ENCODE measurements at regions of chr5 and their contacts with region 1.

Region 1: DNA sequence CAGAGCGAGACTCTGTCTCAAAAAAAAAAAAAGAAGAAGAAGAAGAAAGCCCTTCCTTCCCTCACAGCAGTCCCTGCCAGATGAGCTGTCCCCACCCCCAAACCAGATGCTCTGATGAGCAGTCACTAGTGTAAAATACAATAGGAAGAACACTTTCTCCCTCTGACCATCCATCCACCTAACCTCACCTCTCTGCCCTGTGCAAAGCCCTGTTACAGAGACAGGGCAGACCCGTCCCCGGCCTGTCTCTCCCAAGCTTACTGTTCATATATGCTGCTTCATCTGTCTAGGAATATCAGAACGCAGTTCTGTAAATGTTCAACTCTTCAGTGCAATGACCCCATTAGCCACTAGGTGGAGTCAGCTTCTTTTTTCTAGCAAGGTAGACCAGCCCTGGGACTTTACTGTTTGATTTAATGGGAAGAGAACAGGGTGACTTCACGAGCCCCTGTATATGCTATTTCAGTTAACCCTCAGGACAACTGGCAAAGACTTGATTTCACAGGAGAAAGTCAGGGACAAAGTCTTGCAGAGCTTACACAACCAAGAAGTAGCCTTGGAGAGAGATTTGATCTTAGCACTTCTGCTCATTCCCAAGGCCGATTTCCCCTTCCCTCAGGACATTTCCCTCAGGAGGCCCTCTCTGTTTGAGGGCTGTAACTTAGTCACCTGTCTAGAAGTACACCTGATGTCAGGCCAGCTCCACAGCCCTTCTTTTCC is 14.9 kb upstream of the FGFR4 start:
- DNase-seq: peak in 1 of 2 experiments; percentile 88
- H3K4me3 ChIP-seq: no peak overlapping the region
- H3K27ac ChIP-seq: no peak overlapping the region
- H3K4me1 ChIP-seq: no peaks in the 10 kb centered on the region
- H3K27me3 ChIP-seq: no peaks in the 10 kb centered on the region; a peak in 1 of 7 replicates
- CTCF ChIP-seq: peak in 2 of 3 experiments; percentile 65 to 90; a peak in 2 of 4 replicates
- EP300 ChIP-seq: no peak
- POLR2A ChIP-seq: no peak
- RAD21 ChIP-seq: peak; percentile 68 to 76

Region 2: DNA sequence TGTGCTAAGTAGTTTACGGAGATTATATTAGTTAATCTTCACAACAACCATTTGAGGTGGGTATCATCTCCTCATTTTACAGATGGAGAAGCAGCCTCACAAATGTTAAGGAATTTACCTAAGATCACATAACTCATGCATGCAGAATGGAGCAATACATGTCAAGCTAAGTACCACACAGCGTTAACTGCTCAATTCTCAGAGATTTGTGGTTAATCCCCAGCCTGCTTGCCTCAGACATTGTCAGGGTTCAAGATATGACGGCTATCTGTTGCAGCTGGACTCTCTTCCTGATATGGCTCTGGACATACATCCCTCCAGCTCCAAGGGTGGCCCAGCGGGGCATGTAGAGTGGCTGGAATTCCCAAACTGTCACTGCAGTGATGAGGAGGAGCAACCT is 56.7 kb before region 1 on chr5:
- CTCF ChIA-PET with region 1: interaction called, 15 read pairs
- POLR2A ChIA-PET with region 1: no interaction called
- DNase-seq: no peak
- H3K4me3 ChIP-seq: no peak overlapping the region
- H3K27ac ChIP-seq: no peak overlapping the region
- H3K4me1 ChIP-seq: no peaks in the 10 kb centered on the region; a peak in 1 of 7 replicates
- H3K27me3 ChIP-seq: no peaks in the 10 kb centered on the region
- CTCF ChIP-seq: no peak
- EP300 ChIP-seq: no peak
- POLR2A ChIP-seq: no peak
- RAD21 ChIP-seq: no peak

Region 3: DNA sequence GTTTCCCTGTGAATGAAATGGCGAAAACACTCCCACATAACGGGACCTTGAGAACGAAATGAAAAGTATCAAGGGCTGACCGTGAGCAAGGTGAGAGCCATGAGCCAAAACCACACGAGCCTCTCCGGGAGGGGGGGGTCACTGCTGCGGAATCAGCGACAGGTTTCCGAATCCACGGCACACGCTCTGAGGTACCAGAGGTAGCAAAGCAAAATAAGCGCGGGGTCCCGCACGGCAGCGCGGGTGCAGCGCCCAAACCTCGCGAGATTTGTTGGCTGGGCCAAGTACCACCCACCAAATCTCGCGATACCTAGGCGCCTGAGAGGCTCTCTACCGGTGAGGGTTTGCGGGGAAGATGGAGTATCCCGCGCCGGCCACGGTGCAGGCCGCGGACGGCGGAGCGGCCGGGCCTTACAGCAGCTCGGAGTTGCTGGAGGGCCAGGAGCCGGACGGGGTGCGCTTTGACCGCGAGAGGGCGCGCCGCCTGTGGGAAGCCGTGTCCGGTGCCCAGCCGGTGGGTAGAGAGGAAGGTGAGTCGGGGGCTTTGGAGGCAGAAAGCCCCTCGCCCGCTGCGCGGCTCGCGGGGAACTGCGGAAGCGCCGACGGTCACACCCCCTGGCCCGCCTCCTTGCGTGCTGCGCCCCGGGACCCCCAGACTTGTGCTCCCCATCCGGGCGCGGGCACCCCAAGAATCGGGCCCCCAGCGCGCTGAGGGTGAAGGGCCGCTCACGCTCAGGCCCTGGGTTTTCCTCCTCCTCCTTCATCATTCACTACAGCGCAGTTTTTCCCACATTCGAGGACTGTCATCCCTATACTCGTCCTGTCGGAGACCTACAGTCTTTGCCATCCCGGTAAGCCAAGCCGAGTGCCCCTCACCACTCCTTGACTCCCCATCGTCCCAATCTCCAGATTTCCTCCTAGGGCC is 49.2 kb before region 1 on chr5 and contains the start of gene ZNF346:
- CTCF ChIA-PET with region 1: interaction called, 15 read pairs
- POLR2A ChIA-PET with region 1: interaction called, 3 read pairs
- DNase-seq: peak; percentile 70 to 93
- H3K4me3 ChIP-seq: peak within 1 kb of the TSS; percentile 49 to 75 (median 74)
- H3K27ac ChIP-seq: peak within 1 kb of the TSS; percentile 13; the same call in 1 of the 2 replicates
- H3K4me1 ChIP-seq: peaks cover 0 to 4% (median 0%) of the 10 kb centered on the region in 4 experiments; a peak in 3 of 7 replicates
- H3K27me3 ChIP-seq: no peaks in the 10 kb centered on the region
- CTCF ChIP-seq: peak; percentile 55 to 66 (median 64)
- EP300 ChIP-seq: no peak
- POLR2A ChIP-seq: peak in 1 of 2 experiments; percentile 87; a peak in 2 of 3 replicates
- RAD21 ChIP-seq: peak; percentile 1 to 32; a peak in 1 of 4 replicates
- total RNA-seq, gene ZNF346: 19.9 and 20.2 TPM in 2 replicates

Region 4: DNA sequence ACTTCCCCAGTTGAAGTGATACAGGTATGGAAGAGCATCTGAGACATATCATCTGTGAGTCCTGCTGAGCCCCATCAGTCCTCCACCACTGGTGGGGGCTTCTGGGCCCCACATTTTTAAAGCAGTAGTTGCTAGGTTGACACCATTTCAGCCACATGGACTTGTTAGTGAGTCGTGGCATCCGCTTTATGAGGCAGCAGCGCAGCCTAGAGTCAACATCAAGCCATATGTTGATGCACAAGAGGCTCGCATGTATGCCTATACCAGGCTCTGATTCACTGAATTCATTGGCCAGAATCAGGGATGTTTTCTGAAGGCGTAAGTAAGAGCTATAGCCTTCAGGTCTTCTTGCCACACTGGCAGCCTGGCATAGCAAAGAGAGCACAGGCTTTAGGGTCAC is 22.5 kb before region 1 on chr5:
- CTCF ChIA-PET with region 1: interaction called, 16 read pairs
- POLR2A ChIA-PET with region 1: interaction called, 4 read pairs
- DNase-seq: no peak
- H3K4me3 ChIP-seq: no peak overlapping the region
- H3K27ac ChIP-seq: no peak overlapping the region
- H3K4me1 ChIP-seq: no peaks in the 10 kb centered on the region
- H3K27me3 ChIP-seq: no peaks in the 10 kb centered on the region
- CTCF ChIP-seq: peak in 2 of 3 experiments; percentile 17 to 26; a peak in 2 of 4 replicates
- EP300 ChIP-seq: no peak
- POLR2A ChIP-seq: no peak
- RAD21 ChIP-seq: peak; percentile 36 to 55; a peak in 3 of 4 replicates

Region 5: GRCh38 chr5:177086924-177087706 is 15.3 kb after region 1 on chr5:
- CTCF ChIA-PET with region 1: interaction called, 164 read pairs
- POLR2A ChIA-PET with region 1: interaction called, 5 read pairs
- DNase-seq: peak; percentile 25 to 90
- H3K4me3 ChIP-seq: peak overlapping the region; percentile 61 to 83 (median 70)
- H3K27ac ChIP-seq: peak overlapping the region; percentile 21
- H3K4me1 ChIP-seq: peaks cover 0 to 14% (median 8%) of the 10 kb centered on the region in 4 experiments; a peak in 5 of 7 replicates
- H3K27me3 ChIP-seq: no peaks in the 10 kb centered on the region; a peak in 1 of 7 replicates
- CTCF ChIP-seq: peak in 2 of 3 experiments; percentile 67 to 82; a peak in 3 of 4 replicates
- EP300 ChIP-seq: peak in 1 of 2 experiments; percentile 4; a peak in 1 of 3 replicates
- POLR2A ChIP-seq: peak in 1 of 2 experiments; percentile 66; a peak in 2 of 3 replicates
- RAD21 ChIP-seq: peak in 1 of 2 experiments; percentile 40; a peak in 1 of 4 replicates

Region 6: GRCh38 chr5:177094224-177095087 is 22.6 kb after region 1 on chr5:
- CTCF ChIA-PET with region 1: interaction called, 44 read pairs
- POLR2A ChIA-PET with region 1: interaction called, 4 read pairs
- DNase-seq: no peak
- H3K4me3 ChIP-seq: no peak overlapping the region
- H3K27ac ChIP-seq: no peak overlapping the region
- H3K4me1 ChIP-seq: peaks cover 0 to 11% (median 8%) of the 10 kb centered on the region in 4 experiments; a peak in 4 of 7 replicates
- H3K27me3 ChIP-seq: no peaks in the 10 kb centered on the region
- CTCF ChIP-seq: no peak
- EP300 ChIP-seq: no peak
- POLR2A ChIP-seq: no peak
- RAD21 ChIP-seq: no peak

Region 7: DNA sequence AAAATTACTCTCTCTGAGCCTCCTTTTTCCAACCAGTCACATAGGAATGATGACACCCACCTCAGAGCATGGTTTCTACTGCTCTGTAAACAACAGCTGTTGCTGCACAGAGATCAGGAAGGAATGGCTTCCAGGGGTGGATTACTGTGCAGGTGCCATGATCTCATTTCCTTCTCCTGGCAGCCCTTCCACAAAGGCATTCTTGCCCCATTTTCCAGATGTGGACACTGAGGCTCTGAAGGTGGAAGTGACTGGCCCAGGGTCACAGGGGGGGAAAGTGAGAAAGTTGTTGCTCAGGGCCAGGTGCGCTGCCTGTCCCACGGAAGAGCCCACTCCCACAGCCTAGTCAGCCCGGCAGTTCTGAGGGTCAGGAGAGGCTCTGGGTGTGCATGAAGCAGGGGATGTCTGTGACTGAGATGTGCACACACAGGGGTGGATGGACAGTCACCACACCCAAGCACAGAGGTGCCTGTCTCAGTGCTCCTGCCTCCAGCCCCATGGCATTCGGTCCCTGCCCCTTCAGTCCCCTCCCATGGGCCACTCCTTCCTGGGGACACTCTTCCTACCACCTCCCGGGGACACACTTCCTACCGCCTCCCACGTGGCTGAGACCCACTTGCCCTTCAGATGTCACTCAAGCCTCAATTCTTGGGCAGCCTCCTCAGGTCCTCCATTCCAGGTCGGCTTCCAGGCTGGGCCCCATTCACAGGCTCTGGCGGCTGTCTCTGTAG is 31.9 kb after region 1 on chr5:
- CTCF ChIA-PET with region 1: interaction called, 44 read pairs
- POLR2A ChIA-PET with region 1: interaction called, 4 read pairs
- DNase-seq: no peak
- H3K4me3 ChIP-seq: no peak overlapping the region
- H3K27ac ChIP-seq: no peak overlapping the region
- H3K4me1 ChIP-seq: peaks cover 0 to 16% (median 5%) of the 10 kb centered on the region in 4 experiments; a peak in 5 of 7 replicates
- H3K27me3 ChIP-seq: no peaks in the 10 kb centered on the region
- CTCF ChIP-seq: no peak
- EP300 ChIP-seq: no peak
- POLR2A ChIP-seq: no peak
- RAD21 ChIP-seq: no peak

Measured in H1 (cell line).